Cardiac septum (tissue), 1 donor: ENCODE measurements at regions of chr2 and their contacts with region 1.

Region 1: GRCh38 chr2:147904044-147904443 is 59.2 kb downstream of the ACVR2A start:
- DNase-seq: no peak

Region 2: DNA sequence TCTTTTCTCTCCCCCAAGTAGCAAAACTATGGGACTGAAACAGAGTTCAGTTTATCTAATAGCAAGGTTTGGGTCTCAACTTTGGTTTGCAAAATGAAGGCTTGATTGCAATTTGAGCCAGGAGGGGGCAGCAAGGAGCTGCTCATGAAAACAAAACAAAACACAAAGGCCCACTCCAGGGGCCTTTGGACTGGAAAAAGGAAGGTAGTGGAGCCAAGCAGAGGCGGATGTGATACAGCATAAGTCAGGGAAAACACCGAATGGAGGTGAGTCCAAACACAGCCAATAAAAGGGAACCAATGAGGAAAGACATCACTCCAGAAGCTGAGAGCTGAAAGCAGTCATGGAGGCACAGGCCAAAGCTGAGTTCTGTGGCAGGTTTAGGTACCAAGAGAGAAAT is 858.9 kb before region 1 on chr2:
- intact Hi-C with region 1: loop called (anchors 10 kb)
- DNase-seq: no peak